HepG2 (cell line): ENCODE measurements at regions of chr3 and their contacts with region 1.

Region 1: DNA sequence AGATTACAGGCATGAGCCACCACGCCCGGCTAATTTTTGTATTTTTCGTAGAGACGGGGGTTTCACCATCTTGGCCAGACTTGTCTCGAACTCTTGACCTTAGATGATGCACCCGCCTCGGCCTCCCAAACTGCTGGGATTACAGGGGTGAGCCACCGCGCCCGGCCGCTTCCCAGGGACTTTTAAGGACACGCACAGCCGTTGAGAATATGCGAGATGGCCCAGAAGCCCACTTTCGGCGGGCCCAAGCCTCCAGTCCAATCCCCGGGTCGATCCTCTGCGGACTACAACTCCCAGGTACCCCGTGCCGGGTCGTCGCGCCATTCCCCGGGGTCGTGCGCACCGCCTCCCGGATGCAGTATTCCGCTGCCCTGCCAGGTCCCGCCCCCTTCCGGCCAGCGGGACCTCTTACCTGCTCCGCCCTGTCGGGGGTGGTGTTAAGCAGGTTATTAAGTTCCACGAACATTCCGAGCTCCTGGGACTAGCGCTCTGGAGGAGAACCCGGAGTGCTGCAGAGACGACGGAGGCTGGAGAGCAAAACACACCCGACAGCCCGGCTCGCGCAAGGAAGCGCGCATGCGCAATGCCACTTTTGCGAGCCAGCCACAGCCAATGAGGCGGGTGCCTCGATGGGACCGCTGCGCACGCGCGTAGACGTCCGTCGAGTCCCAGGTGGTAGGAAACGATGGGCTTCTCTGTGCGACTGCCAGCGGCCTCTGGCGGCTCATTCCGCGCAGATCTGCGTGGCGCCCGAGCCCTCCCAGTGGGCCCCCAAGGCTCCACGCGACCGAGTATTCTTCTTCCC is at the start of gene ELP6:
- DNase-seq: peak; percentile 91
- ATAC-seq: peak; percentile 98
- H3K4me3 ChIP-seq: peak within 1 kb of the TSS; percentile 77 to 87 (median 86)
- H3K27ac ChIP-seq: peak within 1 kb of the TSS; percentile 97
- H3K4me1 ChIP-seq: peaks cover 40% of the 10 kb centered on the region
- H3K27me3 ChIP-seq: no peaks in the 10 kb centered on the region; a peak in 1 of 5 replicates
- CTCF ChIP-seq: peak; percentile 87
- EP300 ChIP-seq: no peak
- POLR2A ChIP-seq: peak; percentile 80 to 87
- RAD21 ChIP-seq: peak; percentile 83
- total RNA-seq, gene ELP6: 38.6 and 45.0 TPM in 2 replicates

Region 2: GRCh38 chr3:47440131-47440530 is 73.2 kb before region 1 on chr3:
- CTCF ChIA-PET with region 1: no interaction called
- POLR2A ChIA-PET with region 1: interaction called, 5 read pairs
- in situ Hi-C with region 1: no loop called
- intact Hi-C with region 1: loop called (anchors 1 kb)
- DNase-seq: peak; percentile 79
- ATAC-seq: peak; percentile 71
- H3K4me3 ChIP-seq: no peak overlapping the region
- H3K27ac ChIP-seq: peak overlapping the region; percentile 60
- H3K4me1 ChIP-seq: peaks cover 63% of the 10 kb centered on the region
- H3K27me3 ChIP-seq: no peaks in the 10 kb centered on the region
- CTCF ChIP-seq: peak; percentile 76
- EP300 ChIP-seq: no peak
- POLR2A ChIP-seq: no peak
- RAD21 ChIP-seq: peak; percentile 85; the same call in 1 of the 2 replicates

Region 3: DNA sequence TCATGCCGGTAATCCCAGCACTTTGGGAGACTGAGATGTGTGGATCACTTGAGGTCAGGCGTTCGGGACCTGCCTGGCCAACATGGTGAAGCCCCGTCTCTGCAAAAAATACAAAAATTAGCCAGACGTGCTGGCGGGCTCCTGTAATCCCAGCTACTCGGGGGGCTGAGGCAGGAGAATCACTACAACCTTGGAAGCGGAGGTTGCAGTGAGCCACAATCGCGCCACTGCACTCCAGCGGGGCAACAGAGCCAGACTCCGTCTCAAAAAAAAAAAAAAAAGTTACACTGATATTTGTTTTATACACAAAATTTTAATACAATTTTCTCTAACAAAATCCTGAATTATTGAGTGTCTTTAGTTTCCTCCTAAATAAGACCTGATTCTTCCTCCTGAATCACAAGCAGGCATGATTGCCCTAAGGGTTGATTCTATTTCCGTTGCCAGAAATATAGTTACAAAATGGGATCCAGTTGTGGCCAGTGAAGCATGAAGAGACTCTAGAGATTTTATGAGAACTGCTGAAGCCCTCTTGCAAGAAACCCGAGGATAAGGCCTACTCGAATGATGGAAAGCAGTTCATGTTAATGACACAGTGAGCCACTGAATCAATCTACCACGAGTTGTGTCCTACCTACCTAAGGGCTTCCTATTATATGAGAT is 278.0 kb after region 1 on chr3:
- CTCF ChIA-PET with region 1: no interaction called
- POLR2A ChIA-PET with region 1: no interaction called
- in situ Hi-C with region 1: loop called (anchors 5 kb)
- intact Hi-C with region 1: no loop called
- DNase-seq: no peak
- ATAC-seq: no peak
- H3K4me3 ChIP-seq: no peak overlapping the region
- H3K27ac ChIP-seq: no peak overlapping the region
- H3K4me1 ChIP-seq: peaks cover 21% of the 10 kb centered on the region
- H3K27me3 ChIP-seq: no peaks in the 10 kb centered on the region
- CTCF ChIP-seq: no peak
- EP300 ChIP-seq: no peak
- POLR2A ChIP-seq: no peak
- RAD21 ChIP-seq: no peak